ENCODE measurements at regions of chr22 and their contacts with region 1.

Region 1: GRCh38 chr22:46296257-46297150 is at the start of gene GTSE1:
- DNase-seq: peak; percentile 97
- H3K4me3 ChIP-seq: peak within 1 kb of the TSS; percentile 42 to 75 (median 73)
- H3K27ac ChIP-seq: peak within 1 kb of the TSS; percentile 65
- H3K4me1 ChIP-seq: peaks cover 14% of the 10 kb centered on the region
- H3K27me3 ChIP-seq: no peaks in the 10 kb centered on the region
- CTCF ChIP-seq: no peak
- POLR2A ChIP-seq: peak; percentile 71
- total RNA-seq, gene GTSE1: 57.0 and 57.2 TPM in 2 replicates

Region 2: GRCh38 chr22:46267431-46268279 is 28.8 kb before region 1 on chr22 and contains the start of gene TTC38:
- CTCF ChIA-PET with region 1: interaction called, 4 read pairs
- POLR2A ChIA-PET with region 1: interaction called, 3 read pairs
- dilution Hi-C with region 1: no loop called
- intact Hi-C with region 1: loop called (anchors 1 kb)
- DNase-seq: peak; percentile 81
- H3K4me3 ChIP-seq: peak within 1 kb of the TSS; percentile 47 to 76 (median 60)
- H3K27ac ChIP-seq: no peak within 1 kb of the TSS
- H3K4me1 ChIP-seq: peaks cover 20% of the 10 kb centered on the region
- H3K27me3 ChIP-seq: peaks cover 0 to 3% of the 10 kb centered on the region in 2 experiments
- CTCF ChIP-seq: no peak
- POLR2A ChIP-seq: peak; percentile 49
- total RNA-seq, gene TTC38: 33.1 and 39.7 TPM in 2 replicates

Region 3: GRCh38 chr22:46335201-46336118 is 39.0 kb after region 1 on chr22 and contains the start of gene TRMU:
- CTCF ChIA-PET with region 1: no interaction called
- POLR2A ChIA-PET with region 1: no interaction called
- dilution Hi-C with region 1: no loop called
- intact Hi-C with region 1: loop called (anchors 2 kb)
- DNase-seq: peak; percentile 84
- H3K4me3 ChIP-seq: peak within 1 kb of the TSS; percentile 76 to 98 (median 84)
- H3K27ac ChIP-seq: peak within 1 kb of the TSS; percentile 41
- H3K4me1 ChIP-seq: peaks cover 7% of the 10 kb centered on the region
- H3K27me3 ChIP-seq: no peaks in the 10 kb centered on the region
- CTCF ChIP-seq: no peak
- POLR2A ChIP-seq: peak; percentile 79
- total RNA-seq, gene TRMU: 60.4 and 65.7 TPM in 2 replicates

Region 4: DNA sequence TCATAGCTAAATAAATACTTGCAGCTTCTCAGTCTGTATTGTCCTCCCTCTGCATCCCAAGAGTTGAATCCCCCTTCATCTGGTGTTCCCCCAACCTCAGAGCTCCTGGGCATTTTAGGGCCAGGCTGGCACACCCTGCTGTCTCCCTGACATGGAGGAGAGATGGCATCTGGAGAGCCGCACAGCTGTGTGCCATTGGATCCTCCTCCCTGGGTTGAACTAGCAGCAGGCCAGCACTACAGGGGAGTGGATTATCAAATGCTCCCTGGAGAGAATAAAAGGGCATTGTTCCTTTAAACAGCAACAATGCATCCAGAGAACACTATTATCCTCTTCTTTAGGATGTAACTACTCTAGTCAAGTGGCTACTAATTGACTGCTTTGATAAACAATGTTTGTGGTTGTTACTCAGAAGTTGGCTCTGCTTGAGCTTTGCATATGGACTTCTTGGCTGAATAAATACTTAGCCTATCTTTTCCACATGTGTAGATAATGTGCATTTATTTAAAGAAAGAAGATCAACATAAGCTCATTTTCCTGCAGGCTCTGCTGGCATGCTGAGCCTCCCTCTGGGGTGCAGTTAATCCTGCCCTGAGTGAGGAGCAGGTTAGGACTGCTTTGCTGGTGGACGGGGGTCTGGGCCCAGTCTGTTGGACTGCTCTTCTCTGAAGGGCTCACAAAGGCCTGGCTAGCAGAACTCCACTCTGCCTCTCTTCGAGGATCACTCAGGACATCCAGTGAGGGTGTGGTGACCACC is 1363.1 kb after region 1 on chr22:
- CTCF ChIA-PET with region 1: no interaction called
- POLR2A ChIA-PET with region 1: no interaction called
- dilution Hi-C with region 1: no loop called
- intact Hi-C with region 1: no loop called
- DNase-seq: no peak
- H3K4me3 ChIP-seq: no peak overlapping the region
- H3K27ac ChIP-seq: no peak overlapping the region
- H3K4me1 ChIP-seq: no peaks in the 10 kb centered on the region
- H3K27me3 ChIP-seq: no peaks in the 10 kb centered on the region
- CTCF ChIP-seq: no peak
- POLR2A ChIP-seq: no peak